ENCODE measurements at regions of chr9 and their contacts with region 1.

Region 1: GRCh38 chr9:71768388-71769174 is at the start of gene CEMIP2:
- DNase-seq: peak; percentile 89 to 95
- ATAC-seq: peak; percentile 87 to 89 (median 88)
- H3K4me3 ChIP-seq: peak within 1 kb of the TSS; percentile 83
- H3K27ac ChIP-seq: peak within 1 kb of the TSS; percentile 94
- H3K4me1 ChIP-seq: peaks cover 22% of the 10 kb centered on the region
- H3K27me3 ChIP-seq: no peaks in the 10 kb centered on the region
- CTCF ChIP-seq: no peak
- total RNA-seq, gene CEMIP2: 9.6 to 20.3 (median 16.2) TPM

Region 2: DNA sequence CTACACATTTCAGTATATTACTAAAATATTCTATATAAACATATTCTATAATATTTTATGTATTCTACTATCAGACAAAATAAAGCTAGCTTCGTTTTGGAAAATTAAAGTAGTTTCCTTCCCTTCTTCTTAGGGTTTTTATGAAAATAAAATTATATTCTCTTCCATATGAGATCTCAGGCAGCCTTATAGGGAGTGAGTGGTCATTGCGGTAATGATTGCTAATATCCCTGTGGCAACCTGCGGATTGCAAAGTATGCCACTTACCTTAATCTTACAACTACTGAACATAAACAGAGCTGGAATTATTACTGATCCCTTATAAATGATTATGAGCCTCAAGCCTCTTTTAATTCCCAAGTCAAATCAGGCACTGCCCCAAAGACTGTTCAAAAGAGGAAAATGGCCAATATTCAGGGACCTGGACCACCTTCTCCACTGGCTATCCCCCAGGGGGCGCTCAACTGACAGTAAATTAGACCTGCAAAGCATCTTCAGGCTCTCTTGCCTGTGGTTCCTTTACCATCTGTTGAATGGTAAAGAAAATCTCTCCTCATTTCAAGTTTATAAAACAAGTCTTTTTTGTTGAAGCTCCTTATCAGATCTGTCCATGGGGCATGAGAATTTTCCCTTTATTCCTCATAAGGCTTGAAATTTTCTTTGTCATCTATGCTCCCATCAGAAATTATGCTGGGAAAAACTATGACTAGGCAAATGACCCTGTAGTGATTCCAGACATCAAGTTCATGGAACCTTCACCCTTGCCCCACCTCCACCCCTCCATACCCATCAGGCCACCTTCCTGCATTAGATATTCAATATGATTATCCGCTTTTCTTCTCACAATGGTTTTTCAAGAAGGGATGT is 164.2 kb before region 1 on chr9:
- intact Hi-C with region 1: loop called in 1 of 2 experiments (anchors 2 kb)
- DNase-seq: peak; percentile 63 to 76
- ATAC-seq: peak in 2 of 4 donors; percentile 51 to 58
- H3K4me3 ChIP-seq: no peak overlapping the region
- H3K27ac ChIP-seq: no peak overlapping the region
- H3K4me1 ChIP-seq: no peaks in the 10 kb centered on the region
- H3K27me3 ChIP-seq: no peaks in the 10 kb centered on the region
- CTCF ChIP-seq: peak; percentile 66

Region 3: DNA sequence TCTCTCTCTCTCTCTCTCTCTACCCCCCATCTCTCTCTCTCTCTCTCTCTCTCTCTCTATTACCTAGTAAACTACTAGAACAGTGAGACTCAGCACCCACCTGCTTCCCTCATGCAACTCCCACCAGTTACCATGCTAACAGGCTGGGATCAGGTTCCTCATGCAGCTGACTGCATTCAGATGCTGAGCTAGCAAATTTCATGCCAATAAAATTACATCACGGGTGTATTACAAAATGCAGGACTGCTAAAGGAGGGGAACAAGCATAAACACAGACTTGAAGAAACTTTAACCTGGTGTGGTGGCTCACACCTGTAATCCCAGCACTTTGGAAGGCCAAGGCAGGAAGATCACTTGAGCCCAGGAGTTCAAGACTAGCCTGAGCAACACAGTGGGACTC is 76.2 kb before region 1 on chr9:
- intact Hi-C with region 1: no loop called
- DNase-seq: no peak
- ATAC-seq: peak; percentile 70 to 92 (median 82)
- H3K4me3 ChIP-seq: no peak overlapping the region
- H3K27ac ChIP-seq: no peak overlapping the region
- H3K4me1 ChIP-seq: peaks cover 5% of the 10 kb centered on the region
- H3K27me3 ChIP-seq: no peaks in the 10 kb centered on the region
- CTCF ChIP-seq: no peak

Measured in psoas muscle (tissue), 8 donors.